CD8-positive, alpha-beta T cell (primary cell): ENCODE measurements at regions of chr1 and their contacts with region 1.

Region 1: DNA sequence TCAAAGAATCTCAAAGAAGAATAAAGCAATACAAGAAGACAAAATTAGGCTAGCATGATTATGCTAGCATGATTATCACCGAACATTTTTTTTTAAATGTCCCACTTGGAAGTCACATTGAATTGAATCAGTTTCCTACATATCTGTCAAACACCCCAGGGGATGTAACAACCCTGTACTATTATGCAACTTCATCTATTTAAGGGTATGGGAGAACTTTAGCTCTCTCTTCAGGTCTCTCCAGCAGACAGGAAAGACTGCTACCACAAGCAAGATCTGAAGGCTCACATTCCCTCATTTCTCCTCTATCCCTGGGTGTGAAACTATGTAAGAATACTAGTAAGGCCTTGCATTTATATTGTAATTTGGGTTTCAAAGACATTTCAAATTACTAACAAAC is 52.8 kb downstream of the EDEM3 start:
- DNase-seq: no peak
- ATAC-seq: no peak
- H3K4me3 ChIP-seq: no peak overlapping the region
- H3K4me3 Mint-ChIP-seq: no peak overlapping the region
- H3K27ac ChIP-seq: no peak overlapping the region
- H3K27ac Mint-ChIP-seq: peak overlapping the region; percentile 11
- H3K4me1 ChIP-seq: no peaks in the 10 kb centered on the region
- H3K4me1 Mint-ChIP-seq: peaks cover 6% of the 10 kb centered on the region
- H3K27me3 ChIP-seq: no peaks in the 10 kb centered on the region
- H3K27me3 Mint-ChIP-seq: no peaks in the 10 kb centered on the region
- CTCF ChIP-seq: no peak

Region 2: DNA sequence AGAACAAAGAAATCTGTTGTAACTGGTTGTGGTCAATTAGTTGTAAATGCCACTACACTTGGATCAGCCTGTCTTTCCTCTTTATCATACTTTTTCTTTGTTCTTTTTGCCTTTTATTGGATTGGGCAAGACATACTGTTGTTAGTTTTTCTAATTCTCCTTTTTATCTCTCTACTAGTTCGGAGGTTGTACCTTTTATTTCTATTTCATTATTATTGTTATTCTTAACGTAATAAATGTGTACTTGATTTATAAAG is 556.1 kb after region 1 on chr1:
- CTCF ChIA-PET with region 1: no interaction called
- POLR2A ChIA-PET with region 1: no interaction called
- intact Hi-C with region 1: no loop called
- DNase-seq: no peak
- ATAC-seq: no peak
- H3K4me3 ChIP-seq: no peak overlapping the region
- H3K4me3 Mint-ChIP-seq: no peak overlapping the region
- H3K27ac ChIP-seq: no peak overlapping the region
- H3K27ac Mint-ChIP-seq: no peak overlapping the region
- H3K4me1 ChIP-seq: no peaks in the 10 kb centered on the region
- H3K4me1 Mint-ChIP-seq: peaks cover 19% of the 10 kb centered on the region
- H3K27me3 ChIP-seq: no peaks in the 10 kb centered on the region
- H3K27me3 Mint-ChIP-seq: no peaks in the 10 kb centered on the region
- CTCF ChIP-seq: no peak

Region 3: DNA sequence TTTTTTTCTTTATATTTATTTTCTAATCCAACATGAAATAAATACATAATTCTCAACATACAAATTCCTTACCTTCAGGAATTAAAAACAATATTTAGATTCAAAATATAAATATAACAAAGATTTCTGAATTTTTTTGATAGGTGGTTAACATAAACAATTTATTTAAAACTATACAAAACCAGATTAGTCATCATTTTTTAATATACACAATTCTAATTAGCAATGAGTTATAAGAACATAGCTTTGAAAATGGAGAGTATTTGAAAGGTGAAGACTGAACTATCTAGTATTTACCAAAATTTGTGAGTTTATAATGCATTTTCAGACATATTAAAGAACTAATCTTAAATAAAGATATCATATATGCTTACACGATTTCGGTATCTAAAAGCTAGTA is 1635.7 kb after region 1 on chr1:
- CTCF ChIA-PET with region 1: no interaction called
- POLR2A ChIA-PET with region 1: no interaction called
- intact Hi-C with region 1: loop called in 1 of 2 experiments (anchors 10 kb)
- DNase-seq: no peak
- ATAC-seq: no peak
- H3K4me3 ChIP-seq: no peak overlapping the region
- H3K4me3 Mint-ChIP-seq: no peak overlapping the region
- H3K27ac ChIP-seq: no peak overlapping the region
- H3K27ac Mint-ChIP-seq: no peak overlapping the region
- H3K4me1 ChIP-seq: no peaks in the 10 kb centered on the region
- H3K4me1 Mint-ChIP-seq: no peaks in the 10 kb centered on the region
- H3K27me3 ChIP-seq: no peaks in the 10 kb centered on the region
- H3K27me3 Mint-ChIP-seq: no peaks in the 10 kb centered on the region
- CTCF ChIP-seq: no peak